Activated CD8-positive, alpha-beta memory T cell treated with anti-CD3 and anti-CD28 coated beads, Interleukin-2, amount 10 ng/mL, durations not matched to agents 7 days and 5 days (primary cell): ENCODE measurements at regions of chr16 and their contacts with region 1.

Region 1: GRCh38 chr16:4506450-4506849 is 30.3 kb downstream of the HMOX2 start:
- DNase-seq: peak; percentile 78
- ATAC-seq: peak; percentile 74
- H3K4me3 Mint-ChIP-seq: peak overlapping the region; percentile 68
- H3K27ac Mint-ChIP-seq: peak overlapping the region; percentile 94
- H3K4me1 Mint-ChIP-seq: peaks cover 60% of the 10 kb centered on the region
- H3K27me3 Mint-ChIP-seq: no peaks in the 10 kb centered on the region

Region 2: DNA sequence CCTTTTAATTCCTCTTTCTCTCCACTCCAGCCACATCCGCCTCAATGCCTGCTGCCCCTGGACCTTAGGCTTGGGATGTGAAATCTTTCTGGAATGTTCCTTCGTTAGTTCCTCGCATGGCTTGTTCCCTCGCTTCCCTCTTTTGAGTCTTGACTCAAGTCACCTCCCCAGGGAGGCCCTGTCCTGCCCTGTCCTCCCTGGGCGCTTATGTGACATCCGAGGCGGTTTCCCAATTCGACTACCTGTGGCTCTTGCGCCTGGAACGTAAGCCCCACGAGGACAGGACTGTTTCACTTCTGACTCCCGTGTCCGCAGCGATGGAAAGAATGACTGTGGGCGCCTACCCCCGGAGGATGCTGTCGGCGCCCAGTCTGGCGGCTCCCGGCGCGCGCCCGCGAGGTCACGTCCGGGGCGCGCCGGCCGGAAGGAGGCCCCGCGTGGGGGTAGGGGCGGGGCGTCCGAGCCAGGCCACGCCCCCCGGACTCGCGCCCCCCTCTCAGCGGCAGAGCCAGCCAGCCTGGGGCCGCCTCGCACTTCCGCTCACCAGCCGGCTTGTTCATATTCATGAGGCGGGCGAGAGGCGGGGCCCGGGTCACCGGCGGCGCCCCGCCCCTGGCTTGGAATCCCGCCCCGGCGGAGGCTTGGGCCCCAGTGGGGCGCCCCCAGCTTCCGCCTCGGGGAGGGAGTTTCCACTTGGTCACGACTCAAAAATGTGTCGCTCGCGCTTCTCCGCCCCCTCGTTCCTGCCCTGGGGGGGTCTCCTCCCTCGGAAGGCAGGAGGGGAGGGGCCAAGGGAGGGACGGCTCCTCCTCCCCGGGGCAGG is 199.0 kb before region 1 on chr16:
- CTCF ChIA-PET with region 1: no interaction called
- DNase-seq: peak; percentile 98
- ATAC-seq: peak; percentile 94
- H3K4me3 Mint-ChIP-seq: peak overlapping the region; percentile 96
- H3K27ac Mint-ChIP-seq: peak overlapping the region; percentile 97
- H3K4me1 Mint-ChIP-seq: peaks cover 22% of the 10 kb centered on the region
- H3K27me3 Mint-ChIP-seq: no peaks in the 10 kb centered on the region

Region 3: DNA sequence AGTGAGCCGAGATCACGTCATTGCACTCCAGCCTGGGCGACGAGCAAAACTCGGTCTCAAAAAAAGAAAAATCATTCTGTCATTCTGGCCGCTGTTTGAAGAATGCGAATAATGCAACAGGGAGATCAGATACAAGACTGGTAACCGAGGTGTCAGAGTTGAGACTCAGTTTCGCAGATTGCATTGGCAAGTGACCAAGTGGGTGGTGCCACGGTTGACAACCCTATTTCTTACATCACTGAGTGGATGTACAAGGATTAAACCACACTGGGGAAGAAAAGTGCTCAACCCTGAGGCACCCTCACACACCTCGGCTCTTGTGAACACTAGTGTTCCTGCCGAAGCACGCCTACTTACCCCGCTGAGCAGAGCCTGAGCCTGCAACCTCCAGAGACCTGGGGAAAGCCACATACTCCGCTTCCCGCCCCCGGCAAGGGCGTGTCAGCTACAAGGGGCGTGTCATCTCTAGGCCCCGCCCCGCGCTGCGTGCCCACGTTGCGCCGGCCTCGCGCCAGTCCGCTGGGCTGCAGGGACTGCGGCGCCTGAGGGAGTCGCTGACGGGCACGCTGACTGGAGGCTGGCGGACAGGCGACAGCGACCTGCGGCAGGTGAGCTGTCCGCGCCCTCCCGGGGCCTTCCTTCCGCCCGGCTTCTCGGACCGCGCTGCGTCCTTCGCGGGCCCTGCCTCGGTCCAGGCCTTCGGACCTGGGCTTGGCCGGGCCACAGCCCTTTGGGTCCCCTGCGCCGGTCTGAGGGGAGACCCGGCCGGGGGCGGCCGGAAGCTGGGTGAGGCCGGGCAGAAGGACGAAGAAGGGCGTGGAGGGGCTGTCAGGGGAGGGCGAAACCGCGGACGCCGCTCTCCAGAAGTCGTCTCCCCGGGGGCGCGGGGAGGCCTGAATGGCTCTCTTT is 30.3 kb before region 1 on chr16 and contains the start of gene HMOX2:
- CTCF ChIA-PET with region 1: interaction called, 84 read pairs
- DNase-seq: peak; percentile 96
- ATAC-seq: peak; percentile 82
- H3K4me3 Mint-ChIP-seq: peak within 1 kb of the TSS; percentile 92
- H3K27ac Mint-ChIP-seq: peak within 1 kb of the TSS; percentile 80
- H3K4me1 Mint-ChIP-seq: peaks cover 48% of the 10 kb centered on the region
- H3K27me3 Mint-ChIP-seq: no peaks in the 10 kb centered on the region
- total RNA-seq, gene HMOX2: 96.5 to 103 TPM

Region 4: GRCh38 chr16:4517812-4518680 is 11.6 kb after region 1 on chr16:
- CTCF ChIA-PET with region 1: interaction called, 59 read pairs
- DNase-seq: no peak
- ATAC-seq: no peak
- H3K4me3 Mint-ChIP-seq: no peak overlapping the region
- H3K27ac Mint-ChIP-seq: peak overlapping the region; percentile 39
- H3K4me1 Mint-ChIP-seq: peaks cover 40% of the 10 kb centered on the region
- H3K27me3 Mint-ChIP-seq: no peaks in the 10 kb centered on the region

Region 5: GRCh38 chr16:4550591-4550990 is 44.1 kb after region 1 on chr16:
- CTCF ChIA-PET with region 1: interaction called, 136 read pairs
- DNase-seq: no peak
- ATAC-seq: no peak
- H3K4me3 Mint-ChIP-seq: no peak overlapping the region
- H3K27ac Mint-ChIP-seq: no peak overlapping the region
- H3K4me1 Mint-ChIP-seq: peaks cover 5% of the 10 kb centered on the region
- H3K27me3 Mint-ChIP-seq: peaks cover 4% of the 10 kb centered on the region

Region 6: DNA sequence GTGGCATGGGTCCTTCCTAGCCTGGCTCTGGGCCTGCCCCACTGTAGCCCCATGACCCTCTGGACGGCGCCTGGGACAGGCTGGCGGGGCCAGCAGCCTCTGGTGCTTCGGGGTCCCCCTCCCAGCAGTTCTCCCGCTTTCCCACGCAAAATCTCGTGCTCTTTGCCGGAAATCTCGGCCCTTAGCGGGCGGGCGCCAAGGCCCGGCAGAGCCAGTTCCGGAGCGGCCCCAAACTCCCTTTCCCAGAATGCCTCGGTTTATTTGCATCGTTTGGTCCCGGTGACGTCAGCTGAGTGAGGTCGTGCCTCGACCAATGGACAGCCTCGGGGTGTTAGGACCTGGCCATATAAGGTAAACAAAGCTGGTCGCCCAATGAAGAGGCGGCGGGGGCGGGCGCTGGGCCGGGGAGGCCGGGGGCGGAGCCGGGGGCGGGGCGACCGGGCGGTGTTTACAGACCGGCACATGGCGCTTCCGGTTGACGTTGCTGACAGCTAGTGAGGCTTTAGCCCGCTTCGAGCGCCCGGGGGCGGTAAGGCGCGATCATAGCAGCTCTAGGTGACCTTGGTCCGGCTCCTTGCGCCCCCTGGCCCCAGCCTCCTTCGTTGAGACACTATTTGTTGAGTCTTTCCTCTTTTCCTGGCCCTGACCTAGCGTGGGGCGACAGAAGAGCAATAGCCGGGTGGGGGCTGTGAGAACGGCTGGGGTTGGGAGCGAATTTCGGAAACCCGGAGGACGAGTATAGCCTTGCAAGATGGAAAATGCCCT is 109.8 kb after region 1 on chr16:
- CTCF ChIA-PET with region 1: interaction called, 13 read pairs
- DNase-seq: peak; percentile 100
- ATAC-seq: peak; percentile 90
- H3K4me3 Mint-ChIP-seq: peak overlapping the region; percentile 86
- H3K27ac Mint-ChIP-seq: peak overlapping the region; percentile 95
- H3K4me1 Mint-ChIP-seq: peaks cover 29% of the 10 kb centered on the region
- H3K27me3 Mint-ChIP-seq: no peaks in the 10 kb centered on the region

Region 7: GRCh38 chr16:4649744-4650442 is 143.4 kb after region 1 on chr16:
- CTCF ChIA-PET with region 1: interaction called, 10 read pairs
- DNase-seq: no peak
- ATAC-seq: peak; percentile 22
- H3K4me3 Mint-ChIP-seq: no peak overlapping the region
- H3K27ac Mint-ChIP-seq: peak overlapping the region; percentile 58
- H3K4me1 Mint-ChIP-seq: peaks cover 15% of the 10 kb centered on the region
- H3K27me3 Mint-ChIP-seq: peaks cover 4% of the 10 kb centered on the region

Region 8: GRCh38 chr16:4766874-4767628 is 260.6 kb after region 1 on chr16 and contains the start of gene ZNF500:
- CTCF ChIA-PET with region 1: no interaction called
- DNase-seq: peak; percentile 95
- ATAC-seq: peak; percentile 82
- H3K4me3 Mint-ChIP-seq: peak within 1 kb of the TSS; percentile 82
- H3K27ac Mint-ChIP-seq: peak within 1 kb of the TSS; percentile 87
- H3K4me1 Mint-ChIP-seq: peaks cover 24% of the 10 kb centered on the region
- H3K27me3 Mint-ChIP-seq: no peaks in the 10 kb centered on the region
- total RNA-seq, gene ZNF500: 10.4 to 12.2 TPM